ENCODE measurements at regions of chr1 and their contacts with region 1.

Region 1: GRCh38 chr1:118151312-118151937 is 33.6 kb downstream of the SPAG17 start:
- DNase-seq: peak; percentile 70
- H3K4me3 ChIP-seq: no peak overlapping the region
- H3K27ac ChIP-seq: no peak overlapping the region
- H3K4me1 ChIP-seq: peaks cover 29% of the 10 kb centered on the region
- H3K27me3 ChIP-seq: no peaks in the 10 kb centered on the region

Region 2: GRCh38 chr1:118987468-118988185 is 836.2 kb after region 1 on chr1:
- in situ Hi-C with region 1: loop called (anchors 10 kb)
- DNase-seq: peak; percentile 82
- H3K4me3 ChIP-seq: peak overlapping the region; percentile 82
- H3K27ac ChIP-seq: peak overlapping the region; percentile 96
- H3K4me1 ChIP-seq: no peaks in the 10 kb centered on the region; the same call in 1 of the 2 replicates
- H3K27me3 ChIP-seq: no peaks in the 10 kb centered on the region

Region 3: DNA sequence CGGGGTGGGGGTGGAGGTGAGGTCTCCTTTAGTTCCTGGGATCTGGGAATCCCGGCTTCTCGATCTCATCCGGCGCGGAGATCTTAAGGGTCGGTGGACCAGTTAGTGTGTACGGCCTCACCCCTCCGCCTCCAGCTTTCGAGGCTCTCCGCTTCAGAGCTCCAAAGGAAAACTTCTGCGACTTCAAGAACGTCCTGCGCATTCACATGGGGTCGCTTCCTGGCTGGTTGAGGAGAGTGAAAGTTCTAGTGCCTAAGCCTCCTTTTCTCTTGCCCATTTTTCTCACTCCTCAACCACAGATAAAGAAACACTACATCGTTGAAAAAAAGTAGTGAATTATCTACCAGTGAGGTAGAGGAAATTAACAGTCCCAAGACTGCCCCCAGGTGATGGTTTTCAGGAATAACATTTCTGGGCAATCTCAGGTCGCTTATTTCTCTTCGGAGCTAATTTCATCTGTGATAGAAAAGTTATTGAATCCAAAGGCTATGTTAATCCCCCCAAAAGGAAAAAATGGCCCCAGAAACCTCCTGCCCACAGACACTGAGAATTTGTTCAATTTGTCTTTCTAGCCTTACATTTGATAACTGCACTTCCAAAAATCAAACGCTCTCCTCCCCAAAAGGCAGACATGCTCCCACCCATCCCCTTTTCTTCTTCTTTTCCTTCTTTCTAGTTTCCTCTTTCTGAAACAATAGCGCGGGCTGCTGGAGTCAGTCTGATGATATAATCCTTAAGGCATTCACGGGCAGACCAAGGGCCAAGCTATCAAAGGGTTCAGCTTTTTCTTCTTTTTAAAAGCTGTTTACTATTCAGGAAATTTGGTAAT is 857.3 kb after region 1 on chr1:
- in situ Hi-C with region 1: no loop called
- DNase-seq: peak; percentile 79
- H3K4me3 ChIP-seq: peak overlapping the region; percentile 72
- H3K27ac ChIP-seq: peak overlapping the region; percentile 78
- H3K4me1 ChIP-seq: peaks cover 19% of the 10 kb centered on the region
- H3K27me3 ChIP-seq: 0 out of 2 replicates have a peak, but pooled peaks cover 7% of the 10 kb centered on the region